GM12878 (cell line): ENCODE measurements at regions of chr6 and their contacts with region 1.

Region 1: GRCh38 chr6:137791281-137792159 is 75.5 kb upstream of the TNFAIP3 start:
- DNase-seq: no peak
- ATAC-seq: peak; percentile 29
- H3K4me3 ChIP-seq: peak overlapping the region; percentile 25
- H3K27ac ChIP-seq: peak overlapping the region; percentile 89
- H3K4me1 ChIP-seq: peaks cover 18% of the 10 kb centered on the region
- H3K27me3 ChIP-seq: no peaks in the 10 kb centered on the region
- CTCF ChIP-seq: no peak
- EP300 ChIP-seq: no peak
- POLR2A ChIP-seq: no peak
- RAD21 ChIP-seq: no peak

Region 2: DNA sequence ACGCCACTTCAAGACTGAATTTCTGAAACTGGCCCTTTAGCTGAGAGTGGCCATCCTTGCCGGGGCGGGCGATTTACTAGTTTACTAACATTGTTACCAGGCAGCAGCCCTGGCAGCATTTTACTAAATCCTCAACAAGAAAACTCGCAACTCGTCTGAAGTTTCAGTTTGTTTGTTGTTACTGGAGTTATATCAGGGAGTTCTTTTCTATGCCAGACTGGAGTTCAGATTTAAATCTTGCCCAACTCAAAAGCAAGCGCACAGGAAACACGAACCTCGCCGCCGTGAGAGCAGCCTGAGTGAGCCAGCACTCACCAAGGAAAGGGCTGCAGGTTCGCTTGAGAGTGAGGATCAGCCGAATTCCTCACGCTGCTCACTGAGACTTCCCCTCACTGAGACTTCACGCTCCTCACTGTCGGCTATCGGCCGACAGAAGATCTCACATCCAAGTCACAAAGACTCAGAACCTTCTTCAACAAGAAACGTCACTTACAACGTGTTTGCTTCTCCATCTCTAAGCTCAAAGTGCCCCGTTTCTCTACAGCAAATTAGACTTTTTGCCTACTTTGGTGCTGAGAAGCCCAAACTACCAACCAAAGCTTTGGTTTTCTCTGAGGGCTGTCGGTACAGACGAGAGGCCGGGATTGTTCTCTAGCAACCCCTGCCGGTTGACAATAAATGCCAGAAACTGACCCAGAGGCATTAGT is 376.2 kb before region 1 on chr6:
- CTCF ChIA-PET with region 1: no interaction called
- POLR2A ChIA-PET with region 1: no interaction called
- RAD21 ChIA-PET with region 1: no interaction called
- SMC1A ChIA-PET with region 1: no interaction called
- in situ Hi-C with region 1: no loop called
- intact Hi-C with region 1: no loop called
- DNase-seq: no peak
- ATAC-seq: peak; percentile 99
- H3K4me3 ChIP-seq: peak overlapping the region; percentile 62
- H3K27ac ChIP-seq: no peak overlapping the region
- H3K4me1 ChIP-seq: peaks cover 4% of the 10 kb centered on the region
- H3K27me3 ChIP-seq: peaks cover 0 to 3% of the 10 kb centered on the region in 2 experiments; a peak in 1 of 4 replicates
- CTCF ChIP-seq: peak; percentile 79 to 89 (median 85)
- EP300 ChIP-seq: no peak
- POLR2A ChIP-seq: no peak
- RAD21 ChIP-seq: peak; percentile 84

Region 3: DNA sequence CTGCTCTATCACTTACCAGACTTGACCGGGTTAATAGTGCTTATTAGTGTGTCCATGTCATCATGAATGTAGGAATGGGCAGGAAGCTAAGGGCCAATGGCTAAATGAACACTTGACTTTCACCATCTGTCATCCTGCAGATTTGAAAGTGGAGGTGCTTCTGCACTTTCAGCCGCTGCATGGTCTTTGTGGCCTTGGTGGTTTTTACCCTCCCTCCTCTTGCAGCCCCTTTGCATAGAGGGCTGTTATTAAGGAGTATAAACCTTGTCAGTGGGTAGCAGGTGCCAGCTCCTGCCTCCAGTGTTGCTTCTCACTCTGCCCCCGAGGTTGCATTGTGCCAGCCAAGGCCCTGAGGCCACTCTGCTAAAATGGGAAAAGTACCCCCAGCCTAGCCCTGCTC is 46.6 kb before region 1 on chr6:
- CTCF ChIA-PET with region 1: interaction called, 3 read pairs
- POLR2A ChIA-PET with region 1: interaction called, 7 read pairs
- RAD21 ChIA-PET with region 1: interaction called, 7 read pairs
- SMC1A ChIA-PET with region 1: interaction called, 20 read pairs
- in situ Hi-C with region 1: no loop called
- intact Hi-C with region 1: no loop called
- DNase-seq: peak; percentile 75
- ATAC-seq: peak; percentile 79
- H3K4me3 ChIP-seq: peak overlapping the region; percentile 29; the same call in 1 of the 2 replicates
- H3K27ac ChIP-seq: peak overlapping the region; percentile 34; the same call in 1 of the 2 replicates
- H3K4me1 ChIP-seq: peaks cover 36% of the 10 kb centered on the region
- H3K27me3 ChIP-seq: no peaks in the 10 kb centered on the region
- CTCF ChIP-seq: no peak
- EP300 ChIP-seq: peak; percentile 25 to 28; a peak in 2 of 4 replicates
- POLR2A ChIP-seq: no peak
- RAD21 ChIP-seq: no peak

Region 4: GRCh38 chr6:137754366-137754765 is 37.2 kb before region 1 on chr6:
- CTCF ChIA-PET with region 1: interaction called, 5 read pairs
- POLR2A ChIA-PET with region 1: interaction called, 6 read pairs
- RAD21 ChIA-PET with region 1: interaction called, 4 read pairs
- SMC1A ChIA-PET with region 1: interaction called, 11 read pairs
- in situ Hi-C with region 1: no loop called
- intact Hi-C with region 1: no loop called
- DNase-seq: no peak
- ATAC-seq: peak; percentile 86
- H3K4me3 ChIP-seq: no peak overlapping the region
- H3K27ac ChIP-seq: peak overlapping the region; percentile 59
- H3K4me1 ChIP-seq: peaks cover 38% of the 10 kb centered on the region
- H3K27me3 ChIP-seq: no peaks in the 10 kb centered on the region
- CTCF ChIP-seq: no peak
- EP300 ChIP-seq: no peak
- POLR2A ChIP-seq: no peak
- RAD21 ChIP-seq: no peak

Region 5: DNA sequence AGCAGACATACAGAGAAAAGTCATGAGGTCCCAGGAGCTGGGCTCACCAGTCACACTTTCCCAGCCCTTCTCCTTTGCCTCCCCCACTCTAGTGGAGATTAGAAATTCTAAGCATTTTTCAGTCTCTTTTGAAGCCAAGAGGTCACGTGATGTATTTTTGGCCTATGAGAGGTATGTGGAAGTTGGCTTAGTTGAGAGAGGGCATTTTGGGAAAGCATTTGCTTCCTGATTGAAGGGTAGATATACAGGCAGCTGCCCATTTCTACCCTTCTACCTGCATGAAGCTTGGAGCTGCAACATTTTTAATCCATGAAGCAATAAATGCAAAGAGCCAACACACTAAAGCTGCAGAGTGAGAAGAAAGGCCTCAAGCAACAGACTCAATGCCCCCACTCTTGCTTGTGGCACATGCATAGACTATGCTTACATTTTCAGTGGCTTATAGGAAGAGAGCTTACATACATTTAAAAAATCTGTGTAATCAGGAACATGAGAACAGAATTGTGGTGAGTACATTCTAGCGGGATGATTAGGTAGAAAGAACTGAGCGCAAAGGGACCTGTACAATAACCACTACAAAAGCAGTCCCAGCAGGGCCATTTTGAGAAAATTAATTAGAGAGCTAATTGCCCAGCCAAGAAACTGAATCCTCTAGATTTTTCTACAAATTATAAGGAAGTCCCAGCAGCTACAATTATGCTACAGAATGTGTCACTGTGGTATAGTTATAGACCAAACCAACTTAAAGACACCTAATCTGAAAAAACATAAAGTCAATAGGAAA is 30.2 kb before region 1 on chr6:
- CTCF ChIA-PET with region 1: interaction called, 5 read pairs
- POLR2A ChIA-PET with region 1: interaction called, 5 read pairs
- RAD21 ChIA-PET with region 1: interaction called, 3 read pairs
- SMC1A ChIA-PET with region 1: interaction called, 11 read pairs
- in situ Hi-C with region 1: no loop called
- intact Hi-C with region 1: no loop called
- DNase-seq: no peak
- ATAC-seq: no peak
- H3K4me3 ChIP-seq: no peak overlapping the region
- H3K27ac ChIP-seq: no peak overlapping the region
- H3K4me1 ChIP-seq: peaks cover 10% of the 10 kb centered on the region
- H3K27me3 ChIP-seq: no peaks in the 10 kb centered on the region
- CTCF ChIP-seq: no peak
- EP300 ChIP-seq: no peak
- POLR2A ChIP-seq: no peak
- RAD21 ChIP-seq: no peak

Region 6: GRCh38 chr6:137776786-137777686 is 14.5 kb before region 1 on chr6:
- CTCF ChIA-PET with region 1: interaction called, 4 read pairs
- POLR2A ChIA-PET with region 1: interaction called, 7 read pairs
- RAD21 ChIA-PET with region 1: interaction called, 5 read pairs
- SMC1A ChIA-PET with region 1: interaction called, 25 read pairs
- in situ Hi-C with region 1: no loop called
- intact Hi-C with region 1: no loop called
- DNase-seq: no peak
- ATAC-seq: no peak
- H3K4me3 ChIP-seq: no peak overlapping the region
- H3K27ac ChIP-seq: no peak overlapping the region
- H3K4me1 ChIP-seq: no peaks in the 10 kb centered on the region
- H3K27me3 ChIP-seq: no peaks in the 10 kb centered on the region
- CTCF ChIP-seq: no peak
- EP300 ChIP-seq: no peak
- POLR2A ChIP-seq: no peak
- RAD21 ChIP-seq: no peak

Region 7: GRCh38 chr6:137811121-137811915 is 19.8 kb after region 1 on chr6:
- CTCF ChIA-PET with region 1: interaction called, 22 read pairs
- POLR2A ChIA-PET with region 1: interaction called, 12 read pairs
- RAD21 ChIA-PET with region 1: interaction called, 35 read pairs
- SMC1A ChIA-PET with region 1: interaction called, 24 read pairs
- in situ Hi-C with region 1: no loop called
- intact Hi-C with region 1: no loop called
- DNase-seq: peak; percentile 95
- ATAC-seq: peak; percentile 95
- H3K4me3 ChIP-seq: peak overlapping the region; percentile 20
- H3K27ac ChIP-seq: peak overlapping the region; percentile 89
- H3K4me1 ChIP-seq: peaks cover 31% of the 10 kb centered on the region
- H3K27me3 ChIP-seq: no peaks in the 10 kb centered on the region
- CTCF ChIP-seq: no peak
- EP300 ChIP-seq: peak in 1 of 2 experiments; percentile 72; a peak in 2 of 4 replicates
- POLR2A ChIP-seq: peak; percentile 88
- RAD21 ChIP-seq: no peak

Region 8: GRCh38 chr6:137823826-137824555 is 32.5 kb after region 1 on chr6:
- CTCF ChIA-PET with region 1: interaction called, 5 read pairs
- POLR2A ChIA-PET with region 1: interaction called, 6 read pairs
- RAD21 ChIA-PET with region 1: interaction called, 28 read pairs
- SMC1A ChIA-PET with region 1: interaction called, 14 read pairs
- in situ Hi-C with region 1: no loop called
- intact Hi-C with region 1: no loop called
- DNase-seq: no peak
- ATAC-seq: peak; percentile 21
- H3K4me3 ChIP-seq: no peak overlapping the region
- H3K27ac ChIP-seq: no peak overlapping the region; the same call in 1 of the 2 replicates
- H3K4me1 ChIP-seq: peaks cover 32% of the 10 kb centered on the region
- H3K27me3 ChIP-seq: no peaks in the 10 kb centered on the region
- CTCF ChIP-seq: no peak
- EP300 ChIP-seq: no peak
- POLR2A ChIP-seq: no peak
- RAD21 ChIP-seq: no peak